Gastrocnemius medialis (tissue), 4 donors: ENCODE measurements at regions of chr2 and their contacts with region 1.

Region 1: DNA sequence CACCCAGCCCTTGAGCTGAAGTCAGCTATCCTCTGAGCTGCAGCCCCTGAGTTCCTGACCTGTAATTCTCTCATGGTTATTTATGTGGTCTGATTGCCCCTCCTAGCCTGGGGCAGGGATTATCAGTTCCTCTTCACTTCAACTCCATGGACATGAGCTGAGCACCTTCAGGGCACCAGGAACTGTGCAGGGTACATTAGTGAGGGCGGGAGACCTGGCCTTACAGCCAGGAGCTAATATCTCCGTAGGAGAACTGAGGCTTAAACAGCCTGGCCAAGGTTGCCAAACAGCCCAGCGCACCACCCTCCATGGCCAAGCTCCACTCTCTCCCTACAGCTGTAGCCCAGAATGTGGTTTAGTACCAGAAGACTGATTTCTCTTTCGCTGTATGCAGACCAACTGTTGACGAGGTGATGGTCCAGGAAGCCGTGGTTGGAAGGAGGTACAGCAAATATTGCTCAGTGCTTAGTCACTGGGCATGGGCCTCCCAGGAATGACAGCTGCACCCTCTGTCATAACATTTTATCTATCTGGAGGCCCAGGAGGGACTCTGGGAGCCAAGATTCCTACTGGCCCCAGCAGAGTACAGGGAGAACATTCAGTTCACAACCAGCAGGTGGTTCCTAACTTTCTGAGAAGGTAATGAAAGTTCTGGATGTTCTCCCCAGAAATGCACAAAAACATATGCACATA is 228.7 kb upstream of the SIX2 start:
- DNase-seq: peak; percentile 92 to 93
- ATAC-seq: peak; percentile 87 to 89
- H3K4me3 ChIP-seq: peak overlapping the region in 3 of 4 donors; percentile 5 to 30 (median 29)
- H3K27ac ChIP-seq: peak overlapping the region; percentile 89 to 95 (median 92)
- H3K4me1 ChIP-seq: peaks cover 40 to 50% of the 10 kb centered on the region in 2 donors
- H3K27me3 ChIP-seq: no peaks in the 10 kb centered on the region
- CTCF ChIP-seq: peak; percentile 35 to 62 (median 53)
- POLR2A ChIP-seq: peak; percentile 33 to 44

Region 2: GRCh38 chr2:44361330-44362206 is 876.4 kb before region 1 on chr2 and contains the starts of genes CAMKMT and PREPL:
- in situ Hi-C with region 1: no loop called
- intact Hi-C with region 1: loop called (anchors 5 kb)
- DNase-seq: peak; percentile 98 to 99
- ATAC-seq: peak; percentile 94 to 95
- H3K4me3 ChIP-seq: peak within 1 kb of the TSS; percentile 64 to 96 (median 86)
- H3K27ac ChIP-seq: peak within 1 kb of the TSS; percentile 93 to 96 (median 94)
- H3K4me1 ChIP-seq: peaks cover 44 to 47% of the 10 kb centered on the region in 2 donors
- H3K27me3 ChIP-seq: no peaks in the 10 kb centered on the region
- CTCF ChIP-seq: no peak
- POLR2A ChIP-seq: peak; percentile 73 to 87
- total RNA-seq, gene CAMKMT: 2.6 to 9.5 (median 5.2) TPM
- total RNA-seq, gene PREPL: 27.3 to 60.0 (median 52.3) TPM

Region 3: DNA sequence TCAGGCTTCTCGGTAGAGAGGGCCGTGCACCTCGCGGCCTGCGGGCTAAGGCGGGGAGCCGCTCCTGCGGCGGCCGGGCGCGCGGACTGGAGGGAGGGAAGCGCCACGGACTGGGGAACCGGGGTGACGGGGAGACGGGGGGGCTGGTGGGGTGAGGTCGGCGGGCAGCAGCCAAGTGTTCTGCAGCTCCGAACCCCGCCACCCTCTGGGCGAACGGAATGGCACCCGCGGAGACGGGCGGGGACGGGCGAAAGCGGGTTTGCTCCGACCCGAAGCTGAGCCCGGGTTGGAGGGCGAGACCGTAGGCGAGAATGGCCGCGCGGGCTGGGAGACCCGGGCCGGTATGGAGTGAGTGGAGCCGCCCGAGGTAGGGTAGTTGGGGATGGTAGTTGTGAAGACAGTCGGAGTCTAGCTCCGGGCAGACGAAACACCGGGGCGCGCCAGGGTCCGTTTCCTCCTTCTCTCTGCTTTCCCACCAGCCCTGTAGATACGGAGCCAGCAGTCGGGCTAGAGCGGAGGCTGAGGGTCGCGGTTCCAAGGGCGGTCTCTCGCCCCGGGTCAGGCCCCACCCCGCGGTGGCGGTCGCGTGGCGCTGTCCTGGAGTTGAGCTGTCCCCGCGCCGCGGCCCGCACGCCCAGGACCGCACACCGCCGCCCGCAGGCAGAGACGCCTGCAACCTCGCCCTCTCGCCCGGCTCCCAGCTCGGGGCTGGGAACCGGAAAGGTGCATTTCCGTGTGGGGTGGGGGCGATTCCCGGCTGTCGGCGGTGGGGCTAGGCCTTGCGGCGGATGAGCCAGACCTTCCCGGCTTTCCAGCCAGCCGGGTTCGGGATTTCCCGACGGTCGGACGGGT is 68.4 kb before region 1 on chr2:
- in situ Hi-C with region 1: no loop called
- intact Hi-C with region 1: loop called (anchors 2 kb)
- DNase-seq: no peak
- ATAC-seq: peak; percentile 31 to 40
- H3K4me3 ChIP-seq: peak overlapping the region; percentile 56 to 77 (median 62)
- H3K27ac ChIP-seq: peak overlapping the region; percentile 68 to 88 (median 74)
- H3K4me1 ChIP-seq: peaks cover 6 to 10% of the 10 kb centered on the region in 2 donors
- H3K27me3 ChIP-seq: peaks cover 30 to 51% (median 35%) of the 10 kb centered on the region in 3 donors
- CTCF ChIP-seq: peak in 1 of 5 experiments; percentile 8
- POLR2A ChIP-seq: no peak

Region 4: DNA sequence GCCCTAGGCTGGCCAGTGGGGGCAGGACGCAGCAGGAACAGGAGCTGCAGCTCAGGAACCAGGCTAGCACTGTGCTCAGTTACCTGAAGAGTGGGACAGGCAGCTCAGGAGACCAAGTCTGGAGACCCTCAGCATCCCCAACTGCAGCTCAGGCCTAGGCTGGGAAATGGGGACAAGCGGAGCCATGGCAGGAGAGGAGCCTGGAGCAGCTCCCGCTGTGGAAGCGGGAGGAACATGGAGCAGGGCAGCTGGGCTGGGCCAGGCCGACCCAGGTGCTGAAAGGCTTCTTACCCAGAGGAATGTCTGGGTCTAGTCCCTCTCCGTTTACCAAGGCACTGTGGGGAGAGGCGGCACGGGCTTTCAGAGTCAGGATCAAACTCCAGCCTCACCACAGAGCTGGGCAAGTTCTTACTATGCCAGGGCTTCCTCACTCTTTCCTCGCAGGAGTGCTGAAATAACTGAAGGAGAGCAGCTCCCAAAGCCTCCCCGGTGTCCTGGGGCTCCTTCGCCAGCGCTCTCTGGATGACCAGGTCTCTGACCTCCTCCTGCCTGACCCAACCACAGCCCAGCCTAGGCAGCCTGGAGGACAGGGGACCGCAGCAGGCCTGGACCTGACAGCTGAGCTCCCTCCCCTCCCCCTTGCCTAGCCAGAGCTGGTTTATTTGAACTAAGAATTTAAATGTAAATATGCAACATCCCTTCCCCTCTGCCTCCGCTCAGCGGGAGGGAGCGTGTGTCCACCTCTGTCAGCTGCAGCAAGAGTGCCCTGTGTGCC is 19.1 kb after region 1 on chr2:
- in situ Hi-C with region 1: no loop called
- intact Hi-C with region 1: loop called (anchors 2 kb)
- DNase-seq: no peak
- ATAC-seq: peak in 1 of 2 donors; percentile 5
- H3K4me3 ChIP-seq: no peak overlapping the region
- H3K27ac ChIP-seq: peak overlapping the region; percentile 49 to 77 (median 70)
- H3K4me1 ChIP-seq: peaks cover 39 to 46% of the 10 kb centered on the region in 2 donors
- H3K27me3 ChIP-seq: no peaks in the 10 kb centered on the region
- CTCF ChIP-seq: peak in 1 of 5 experiments; percentile 30
- POLR2A ChIP-seq: no peak

Region 5: DNA sequence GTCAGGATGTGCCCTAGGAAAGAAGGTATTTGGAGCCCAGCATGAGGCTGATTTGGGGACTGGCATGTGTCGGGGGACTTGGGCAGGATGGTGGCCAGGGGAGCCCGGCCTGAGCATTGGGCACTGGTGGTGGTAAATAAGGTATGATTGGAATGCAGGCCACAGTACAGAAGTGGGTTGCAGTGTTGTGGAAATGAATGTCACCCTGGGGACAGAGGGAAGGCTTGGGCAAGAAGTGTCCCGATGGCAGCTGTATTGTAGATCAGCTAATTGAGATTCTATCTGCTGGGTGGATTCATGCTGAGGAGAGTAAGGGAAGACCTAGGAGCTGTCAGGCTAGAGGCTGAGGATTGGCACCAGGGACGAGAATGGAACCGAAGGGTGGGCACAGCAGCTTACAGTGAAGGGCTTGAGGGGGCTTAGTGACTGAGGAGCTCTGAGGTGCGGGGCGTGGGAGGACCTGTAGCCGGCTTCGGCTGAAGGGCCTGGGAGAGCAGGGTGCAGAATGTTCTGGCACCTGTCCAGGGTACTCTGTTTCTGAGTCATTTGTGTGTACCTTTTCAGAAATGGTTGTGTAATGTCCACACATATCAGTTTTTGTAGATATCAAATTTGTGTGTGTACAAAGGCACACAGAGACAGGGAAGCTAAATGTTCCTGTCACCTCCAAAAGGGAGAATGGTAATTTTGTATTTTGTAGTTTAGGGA is 583.7 kb after region 1 on chr2:
- in situ Hi-C with region 1: no loop called
- intact Hi-C with region 1: loop called (anchors 10 kb)
- DNase-seq: peak; percentile 91 to 93
- ATAC-seq: peak; percentile 63 to 78
- H3K4me3 ChIP-seq: no peak overlapping the region
- H3K27ac ChIP-seq: peak overlapping the region; percentile 87 to 91 (median 88)
- H3K4me1 ChIP-seq: peaks cover 37 to 53% of the 10 kb centered on the region in 2 donors
- H3K27me3 ChIP-seq: no peaks in the 10 kb centered on the region
- CTCF ChIP-seq: no peak
- POLR2A ChIP-seq: peak in 1 of 2 donors; percentile 34